ENCODE measurements at regions of chr1 and their contacts with region 1.

Region 1: DNA sequence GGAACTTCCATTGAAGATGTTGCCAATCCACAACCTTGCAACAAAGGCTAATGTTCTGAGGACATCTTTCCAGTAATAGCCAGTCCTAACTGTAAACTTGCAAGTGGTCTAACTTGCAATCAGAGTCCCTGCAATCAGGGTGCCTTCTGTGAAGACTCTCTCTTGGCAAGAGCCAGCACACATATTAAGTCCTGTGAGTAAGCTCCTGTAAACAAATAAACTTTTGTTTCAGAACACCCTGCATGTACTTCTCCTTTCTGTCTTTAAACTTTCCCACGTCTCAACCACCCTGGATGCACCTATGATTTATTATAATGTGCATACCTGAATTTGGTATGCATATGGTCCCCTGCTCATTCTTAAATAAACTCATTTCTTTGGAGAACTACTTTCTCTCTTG is 9.1 kb downstream of the GBP7 start:
- DNase-seq: no peak
- ATAC-seq: no peak
- H3K4me3 ChIP-seq: no peak overlapping the region
- H3K4me3 Mint-ChIP-seq: no peak overlapping the region
- H3K27ac ChIP-seq: no peak overlapping the region
- H3K27ac Mint-ChIP-seq: no peak overlapping the region
- H3K4me1 ChIP-seq: no peaks in the 10 kb centered on the region
- H3K4me1 Mint-ChIP-seq: no peaks in the 10 kb centered on the region
- H3K27me3 ChIP-seq: no peaks in the 10 kb centered on the region
- H3K27me3 Mint-ChIP-seq: no peaks in the 10 kb centered on the region
- CTCF ChIP-seq: no peak

Region 2: DNA sequence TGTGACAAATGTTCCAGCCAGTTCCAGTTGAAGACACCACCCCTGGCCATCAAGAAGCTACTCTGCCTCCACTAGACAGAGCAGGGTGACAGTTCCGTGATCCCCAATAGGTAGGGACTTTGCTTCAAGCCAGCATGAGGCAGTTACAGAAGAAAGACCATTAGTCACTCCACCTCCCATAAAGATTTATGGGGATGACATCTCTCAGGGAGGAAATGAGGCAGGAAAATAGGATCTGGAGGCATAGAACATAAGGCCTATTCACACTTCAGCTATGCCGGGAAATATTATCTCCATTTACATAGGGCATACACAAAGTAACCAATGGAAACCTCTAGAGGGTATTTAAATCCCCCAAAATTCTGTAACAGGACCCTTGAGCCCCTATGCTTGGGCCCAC is 12.6 kb after region 1 on chr1:
- CTCF ChIA-PET with region 1: interaction called, 3 read pairs
- POLR2A ChIA-PET with region 1: interaction called, 4 read pairs
- intact Hi-C with region 1: loop called in 1 of 2 experiments (anchors 2 kb)
- DNase-seq: no peak
- ATAC-seq: no peak
- H3K4me3 ChIP-seq: no peak overlapping the region
- H3K4me3 Mint-ChIP-seq: no peak overlapping the region
- H3K27ac ChIP-seq: no peak overlapping the region
- H3K27ac Mint-ChIP-seq: no peak overlapping the region
- H3K4me1 ChIP-seq: no peaks in the 10 kb centered on the region
- H3K4me1 Mint-ChIP-seq: no peaks in the 10 kb centered on the region
- H3K27me3 ChIP-seq: no peaks in the 10 kb centered on the region
- H3K27me3 Mint-ChIP-seq: no peaks in the 10 kb centered on the region
- CTCF ChIP-seq: no peak

Region 3: DNA sequence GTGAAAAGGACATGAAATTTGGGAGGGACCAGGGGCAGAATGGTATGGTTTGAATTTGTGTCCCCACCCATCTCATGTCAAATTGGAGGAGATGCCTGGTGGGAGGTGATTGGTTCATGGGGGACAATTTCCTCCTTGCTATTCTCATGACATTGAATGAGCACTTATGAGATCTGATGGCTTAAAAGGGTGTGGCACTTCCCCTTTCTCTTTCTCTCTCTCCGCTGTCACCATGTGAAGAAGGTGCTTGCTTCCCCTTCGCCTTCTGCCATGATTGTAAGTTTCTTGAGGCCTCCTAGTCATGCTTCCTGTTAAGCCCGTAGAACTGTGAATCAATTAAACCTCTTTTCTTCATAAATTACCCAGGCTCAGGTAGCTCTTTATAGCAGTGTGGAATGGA is 39.7 kb after region 1 on chr1:
- CTCF ChIA-PET with region 1: no interaction called
- POLR2A ChIA-PET with region 1: no interaction called
- intact Hi-C with region 1: no loop called
- DNase-seq: no peak
- ATAC-seq: no peak
- H3K4me3 ChIP-seq: no peak overlapping the region
- H3K4me3 Mint-ChIP-seq: no peak overlapping the region
- H3K27ac ChIP-seq: no peak overlapping the region
- H3K27ac Mint-ChIP-seq: no peak overlapping the region
- H3K4me1 ChIP-seq: peaks cover 11% of the 10 kb centered on the region
- H3K4me1 Mint-ChIP-seq: peaks cover 15% of the 10 kb centered on the region
- H3K27me3 ChIP-seq: no peaks in the 10 kb centered on the region
- H3K27me3 Mint-ChIP-seq: no peaks in the 10 kb centered on the region
- CTCF ChIP-seq: no peak